PC-9 (cell line): ENCODE measurements at regions of chr5 and their contacts with region 1.

Region 1: GRCh38 chr5:16791036-16791705 is 144.9 kb downstream of the MYO10 start:
- DNase-seq: peak; percentile 48 to 55
- H3K4me3 ChIP-seq: no peak overlapping the region
- H3K27ac ChIP-seq: no peak overlapping the region
- H3K4me1 ChIP-seq: no peaks in the 10 kb centered on the region
- H3K27me3 ChIP-seq: no peaks in the 10 kb centered on the region
- CTCF ChIP-seq: peak; percentile 92

Region 2: GRCh38 chr5:16871746-16872339 is 80.7 kb after region 1 on chr5:
- CTCF ChIA-PET with region 1: no interaction called
- POLR2A ChIA-PET with region 1: no interaction called
- intact Hi-C with region 1: loop called (anchors 2 kb)
- DNase-seq: no peak
- H3K4me3 ChIP-seq: no peak overlapping the region
- H3K27ac ChIP-seq: peak overlapping the region; percentile 77; the same call in 1 of the 2 replicates
- H3K4me1 ChIP-seq: peaks cover 28% of the 10 kb centered on the region
- H3K27me3 ChIP-seq: no peaks in the 10 kb centered on the region
- CTCF ChIP-seq: no peak

Region 3: DNA sequence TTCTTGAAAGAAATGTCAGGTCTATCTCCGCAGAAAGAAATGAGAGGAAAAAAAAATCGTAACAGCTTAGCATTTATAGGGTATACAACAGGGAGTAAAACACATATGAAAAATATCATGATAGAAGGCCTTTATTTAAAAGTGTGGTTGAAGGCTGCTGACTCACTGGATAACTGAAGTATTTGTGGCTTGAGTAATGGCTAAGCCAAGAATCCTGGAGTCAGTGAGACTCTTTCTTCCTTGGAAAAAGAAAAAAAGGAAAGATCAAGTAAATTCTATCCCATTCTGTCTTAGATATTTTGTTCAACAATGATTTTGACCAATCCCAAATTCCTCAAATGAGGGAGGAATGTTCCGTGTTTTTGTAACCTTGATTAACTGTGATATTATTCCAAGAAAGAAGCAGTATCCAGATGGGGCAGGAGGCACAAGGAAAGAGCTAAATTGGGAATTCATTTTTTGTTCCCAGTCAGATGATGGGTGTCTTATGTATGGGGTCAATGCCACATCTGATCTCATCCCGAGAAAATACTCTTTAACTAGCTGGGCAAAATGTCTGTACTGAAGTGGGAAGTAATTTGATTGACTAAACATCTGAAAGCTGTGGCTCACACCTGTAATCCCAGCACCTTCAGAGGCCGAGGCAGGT is 209.2 kb after region 1 on chr5:
- CTCF ChIA-PET with region 1: interaction called, 3 read pairs
- POLR2A ChIA-PET with region 1: no interaction called
- intact Hi-C with region 1: loop called (anchors 5 kb)
- DNase-seq: peak; percentile 41 to 86
- H3K4me3 ChIP-seq: no peak overlapping the region
- H3K27ac ChIP-seq: peak overlapping the region; percentile 45
- H3K4me1 ChIP-seq: peaks cover 12% of the 10 kb centered on the region
- H3K27me3 ChIP-seq: no peaks in the 10 kb centered on the region
- CTCF ChIP-seq: no peak

Region 4: GRCh38 chr5:17132444-17133083 is 341.4 kb after region 1 on chr5:
- CTCF ChIA-PET with region 1: interaction called, 6 read pairs
- POLR2A ChIA-PET with region 1: no interaction called
- intact Hi-C with region 1: loop called (anchors 1 kb)
- DNase-seq: no peak
- H3K4me3 ChIP-seq: no peak overlapping the region
- H3K27ac ChIP-seq: no peak overlapping the region
- H3K4me1 ChIP-seq: peaks cover 10% of the 10 kb centered on the region
- H3K27me3 ChIP-seq: no peaks in the 10 kb centered on the region
- CTCF ChIP-seq: peak; percentile 92